ENCODE measurements at regions of chr2 and their contacts with region 1.

Region 1: DNA sequence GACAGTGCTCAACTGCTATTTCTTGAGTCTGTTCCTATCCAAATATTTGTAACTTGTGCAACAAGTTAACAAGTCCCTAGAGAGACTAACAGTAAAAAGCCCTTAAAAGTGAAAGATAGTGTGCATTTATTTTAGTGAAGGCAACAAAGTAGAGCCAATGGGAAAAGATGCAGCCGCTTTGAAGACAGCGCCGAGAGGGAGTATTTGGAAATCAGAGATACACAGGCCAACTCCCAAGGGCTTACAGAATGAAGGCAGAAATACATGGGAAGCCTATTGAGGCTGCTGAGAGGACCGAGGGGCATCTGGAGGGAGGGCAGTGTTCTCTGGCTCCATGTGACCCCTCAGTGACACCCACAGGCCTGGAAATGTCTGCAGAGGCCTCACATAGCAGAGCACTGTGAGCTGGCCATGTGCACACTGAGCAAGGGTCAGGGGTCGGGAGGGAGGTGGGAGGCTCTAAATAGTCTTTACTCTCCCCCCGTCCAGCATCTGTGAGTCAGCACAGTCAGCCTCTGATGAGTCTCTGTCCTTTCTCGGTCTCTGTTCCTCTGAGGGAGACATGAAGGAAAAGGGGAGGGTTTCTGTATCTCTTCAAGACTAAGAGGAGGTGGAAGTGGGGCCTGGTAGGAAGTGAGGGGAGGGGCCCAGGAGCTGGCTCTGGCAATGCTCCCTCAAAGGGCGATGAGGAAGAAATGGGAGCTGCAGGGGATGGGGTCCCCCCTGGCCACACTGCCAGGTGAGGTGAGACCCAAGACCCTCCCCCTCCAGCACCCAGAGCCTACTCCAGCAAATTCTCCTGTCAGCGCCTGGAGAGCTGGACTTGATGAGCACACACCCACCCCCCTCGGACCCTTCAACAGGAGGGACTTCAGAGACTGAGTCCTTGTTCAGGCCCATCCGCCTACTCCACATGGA is 133.6 kb downstream of the SP3 start:
- DNase-seq: peak in 1 of 2 donors; percentile 53
- H3K4me3 ChIP-seq: no peak overlapping the region
- H3K27ac ChIP-seq: peak overlapping the region; percentile 57 to 88
- H3K4me1 ChIP-seq: peaks cover 2 to 10% of the 10 kb centered on the region in 2 donors
- H3K27me3 ChIP-seq: no peaks in the 10 kb centered on the region
- CTCF ChIP-seq: no peak
- POLR2A ChIP-seq: no peak

Region 2: GRCh38 chr2:173414823-173415322 is 416.7 kb before region 1 on chr2:
- intact Hi-C with region 1: no loop called
- DNase-seq: peak in 1 of 2 donors; percentile 35
- H3K4me3 ChIP-seq: no peak overlapping the region
- H3K27ac ChIP-seq: no peak overlapping the region
- H3K4me1 ChIP-seq: no peaks in the 10 kb centered on the region
- H3K27me3 ChIP-seq: no peaks in the 10 kb centered on the region
- CTCF ChIP-seq: no peak
- POLR2A ChIP-seq: no peak

Region 3: GRCh38 chr2:173773076-173773475 is 58.5 kb before region 1 on chr2:
- intact Hi-C with region 1: no loop called
- DNase-seq: no peak
- H3K4me3 ChIP-seq: no peak overlapping the region
- H3K27ac ChIP-seq: no peak overlapping the region
- H3K4me1 ChIP-seq: no peaks in the 10 kb centered on the region
- H3K27me3 ChIP-seq: no peaks in the 10 kb centered on the region
- CTCF ChIP-seq: no peak
- POLR2A ChIP-seq: no peak

Region 4: DNA sequence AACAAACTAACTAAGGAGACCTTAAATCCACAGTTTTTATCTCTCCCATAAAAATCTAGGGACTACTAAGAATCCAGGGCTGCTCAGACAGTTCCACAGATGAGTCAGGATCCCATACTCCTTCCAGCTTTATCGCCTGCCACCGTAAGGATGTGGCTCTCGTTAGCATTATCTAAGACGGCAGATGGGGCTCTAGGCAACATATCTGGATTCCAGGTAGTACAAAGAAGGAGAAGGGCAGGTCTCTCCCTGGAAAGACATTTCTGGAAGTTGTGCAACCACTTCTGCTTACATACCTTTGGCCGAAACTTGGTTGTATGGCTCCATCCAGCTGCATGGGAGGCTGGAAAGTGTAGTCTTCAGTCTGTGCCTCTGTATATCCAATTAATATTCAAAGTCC is 15.8 kb before region 1 on chr2:
- intact Hi-C with region 1: no loop called
- DNase-seq: no peak
- H3K4me3 ChIP-seq: no peak overlapping the region
- H3K27ac ChIP-seq: no peak overlapping the region
- H3K4me1 ChIP-seq: no peaks in the 10 kb centered on the region
- H3K27me3 ChIP-seq: no peaks in the 10 kb centered on the region
- CTCF ChIP-seq: no peak
- POLR2A ChIP-seq: no peak

Region 5: DNA sequence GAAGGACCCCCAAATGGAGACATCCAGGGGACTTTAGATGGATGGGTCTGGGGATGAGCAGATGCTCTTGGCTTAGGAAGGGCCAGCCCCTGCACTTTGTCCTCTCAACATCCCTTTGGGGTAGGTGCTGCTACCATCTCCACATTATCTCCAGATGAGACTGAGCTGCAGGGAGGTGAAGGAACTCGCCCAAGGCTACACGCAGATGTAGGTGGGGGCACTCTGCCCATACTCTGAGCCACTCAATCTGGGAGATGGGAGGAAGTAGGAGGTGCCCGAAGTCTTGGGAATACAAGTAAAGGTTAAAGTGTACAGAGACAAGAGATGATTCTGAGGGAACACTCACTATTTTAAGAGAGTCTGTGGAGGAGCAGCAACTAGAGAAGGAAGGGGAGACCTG is 202.5 kb after region 1 on chr2:
- intact Hi-C with region 1: loop called (anchors 5 kb)
- DNase-seq: no peak
- H3K4me3 ChIP-seq: no peak overlapping the region
- H3K27ac ChIP-seq: no peak overlapping the region
- H3K4me1 ChIP-seq: no peaks in the 10 kb centered on the region
- H3K27me3 ChIP-seq: no peaks in the 10 kb centered on the region
- CTCF ChIP-seq: no peak
- POLR2A ChIP-seq: no peak

Measured in breast epithelium (tissue), 4 donors.